GM12878 (cell line): ENCODE measurements at regions of chr2 and their contacts with region 1.

Region 1: DNA sequence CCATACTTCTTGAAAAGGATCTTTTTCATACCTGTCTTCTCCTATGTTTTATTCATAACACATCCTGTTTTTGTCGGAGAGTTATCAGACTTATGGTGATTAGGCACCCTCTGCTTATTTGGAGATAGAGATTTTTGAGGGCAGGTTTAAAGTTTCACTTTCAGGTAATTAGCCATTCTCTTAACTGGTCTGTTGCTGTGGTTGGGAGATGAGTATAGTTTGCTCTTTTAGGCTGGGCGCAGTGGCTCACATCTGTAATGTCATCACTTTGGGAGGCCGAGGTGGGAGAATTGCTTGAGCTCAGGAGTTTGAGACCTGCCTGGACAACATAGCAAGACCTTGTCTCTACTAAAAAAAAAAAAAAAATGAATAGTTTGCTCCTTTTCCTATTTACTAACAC is 25.3 kb downstream of the SFTPB start:
- DNase-seq: peak; percentile 42
- ATAC-seq: peak; percentile 99
- H3K4me3 ChIP-seq: no peak overlapping the region
- H3K27ac ChIP-seq: no peak overlapping the region
- H3K4me1 ChIP-seq: peaks cover 8% of the 10 kb centered on the region
- H3K27me3 ChIP-seq: no peaks in the 10 kb centered on the region
- CTCF ChIP-seq: no peak
- EP300 ChIP-seq: no peak
- POLR2A ChIP-seq: no peak
- RAD21 ChIP-seq: no peak

Region 2: GRCh38 chr2:85475799-85476490 is 166.8 kb before region 1 on chr2:
- CTCF ChIA-PET with region 1: no interaction called
- POLR2A ChIA-PET with region 1: no interaction called
- RAD21 ChIA-PET with region 1: no interaction called
- SMC1A ChIA-PET with region 1: no interaction called
- in situ Hi-C with region 1: no loop called
- intact Hi-C with region 1: no loop called
- DNase-seq: no peak
- ATAC-seq: peak; percentile 50; the same call in 2 of the 3 replicates
- H3K4me3 ChIP-seq: no peak overlapping the region
- H3K27ac ChIP-seq: no peak overlapping the region
- H3K4me1 ChIP-seq: no peaks in the 10 kb centered on the region
- H3K27me3 ChIP-seq: 0 out of 4 replicates have a peak, but pooled peaks cover 0 to 2% of the 10 kb centered on the region in 2 experiments
- CTCF ChIP-seq: no peak
- EP300 ChIP-seq: no peak
- POLR2A ChIP-seq: no peak
- RAD21 ChIP-seq: no peak

Region 3: GRCh38 chr2:85524336-85524933 is 118.3 kb before region 1 on chr2:
- CTCF ChIA-PET with region 1: no interaction called
- POLR2A ChIA-PET with region 1: no interaction called
- RAD21 ChIA-PET with region 1: no interaction called
- SMC1A ChIA-PET with region 1: no interaction called
- in situ Hi-C with region 1: no loop called
- intact Hi-C with region 1: no loop called
- DNase-seq: no peak
- ATAC-seq: peak; percentile 50
- H3K4me3 ChIP-seq: no peak overlapping the region
- H3K27ac ChIP-seq: no peak overlapping the region
- H3K4me1 ChIP-seq: no peaks in the 10 kb centered on the region; the same call in 1 of the 2 replicates
- H3K27me3 ChIP-seq: no peaks in the 10 kb centered on the region; a peak in 1 of 4 replicates
- CTCF ChIP-seq: no peak
- EP300 ChIP-seq: no peak
- POLR2A ChIP-seq: no peak
- RAD21 ChIP-seq: no peak

Region 4: GRCh38 chr2:85619617-85620016 is 23.1 kb before region 1 on chr2:
- CTCF ChIA-PET with region 1: interaction called, 32 read pairs
- POLR2A ChIA-PET with region 1: no interaction called
- RAD21 ChIA-PET with region 1: interaction called, 4 read pairs
- SMC1A ChIA-PET with region 1: interaction called, 4 read pairs
- in situ Hi-C with region 1: no loop called
- intact Hi-C with region 1: no loop called
- DNase-seq: no peak
- ATAC-seq: no peak
- H3K4me3 ChIP-seq: no peak overlapping the region
- H3K27ac ChIP-seq: no peak overlapping the region
- H3K4me1 ChIP-seq: peaks cover 4% of the 10 kb centered on the region; the same call in 1 of the 2 replicates
- H3K27me3 ChIP-seq: no peaks in the 10 kb centered on the region
- CTCF ChIP-seq: no peak
- EP300 ChIP-seq: no peak
- POLR2A ChIP-seq: no peak
- RAD21 ChIP-seq: no peak

Region 5: GRCh38 chr2:85678794-85679672 is 36.3 kb after region 1 on chr2:
- CTCF ChIA-PET with region 1: interaction called, 12 read pairs
- POLR2A ChIA-PET with region 1: no interaction called
- RAD21 ChIA-PET with region 1: interaction called, 8 read pairs
- SMC1A ChIA-PET with region 1: interaction called, 9 read pairs
- in situ Hi-C with region 1: no loop called
- intact Hi-C with region 1: no loop called
- DNase-seq: no peak
- ATAC-seq: peak; percentile 99
- H3K4me3 ChIP-seq: no peak overlapping the region
- H3K27ac ChIP-seq: no peak overlapping the region
- H3K4me1 ChIP-seq: no peaks in the 10 kb centered on the region
- H3K27me3 ChIP-seq: no peaks in the 10 kb centered on the region
- CTCF ChIP-seq: peak; percentile 96 to 99 (median 99)
- EP300 ChIP-seq: no peak
- POLR2A ChIP-seq: no peak
- RAD21 ChIP-seq: peak; percentile 89

Region 6: DNA sequence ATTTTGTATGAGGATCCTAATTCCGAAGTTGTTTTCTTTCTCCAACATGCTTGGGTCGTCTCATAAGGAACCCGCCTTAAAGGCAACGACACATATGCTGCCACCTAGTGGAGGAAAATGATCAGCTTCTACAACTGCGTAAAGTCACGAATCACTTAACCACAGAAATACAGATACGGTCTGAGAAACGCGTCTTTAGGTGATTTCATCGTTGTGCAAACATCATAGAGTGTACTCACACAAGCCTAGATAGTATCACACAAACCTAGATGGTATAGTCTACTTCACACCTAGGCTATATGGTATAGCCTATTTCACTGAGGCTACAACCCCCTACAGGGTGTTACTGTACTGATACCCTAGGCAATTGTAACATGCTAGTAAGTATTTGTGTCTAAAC is 64.6 kb after region 1 on chr2:
- CTCF ChIA-PET with region 1: interaction called, 162 read pairs
- POLR2A ChIA-PET with region 1: no interaction called
- RAD21 ChIA-PET with region 1: interaction called, 42 read pairs
- SMC1A ChIA-PET with region 1: interaction called, 71 read pairs
- in situ Hi-C with region 1: loop called (anchors 5 kb)
- intact Hi-C with region 1: loop called (anchors 2 kb)
- DNase-seq: peak; percentile 75
- ATAC-seq: peak; percentile 79
- H3K4me3 ChIP-seq: no peak overlapping the region
- H3K27ac ChIP-seq: no peak overlapping the region
- H3K4me1 ChIP-seq: peaks cover 21% of the 10 kb centered on the region
- H3K27me3 ChIP-seq: no peaks in the 10 kb centered on the region
- CTCF ChIP-seq: peak; percentile 74 to 83 (median 82)
- EP300 ChIP-seq: 0 out of 4 replicates have a peak, but pooled peaks of 1 of the 2 experiments have one; percentile 34
- POLR2A ChIP-seq: no peak
- RAD21 ChIP-seq: peak; percentile 77

Region 7: GRCh38 chr2:85723707-85724360 is 81.1 kb after region 1 on chr2:
- CTCF ChIA-PET with region 1: interaction called, 28 read pairs
- POLR2A ChIA-PET with region 1: no interaction called
- RAD21 ChIA-PET with region 1: interaction called, 15 read pairs
- SMC1A ChIA-PET with region 1: interaction called, 12 read pairs
- in situ Hi-C with region 1: no loop called
- intact Hi-C with region 1: loop called (anchors 5 kb)
- DNase-seq: no peak
- ATAC-seq: no peak
- H3K4me3 ChIP-seq: no peak overlapping the region
- H3K27ac ChIP-seq: no peak overlapping the region
- H3K4me1 ChIP-seq: no peaks in the 10 kb centered on the region
- H3K27me3 ChIP-seq: peaks cover 0 to 2% of the 10 kb centered on the region in 2 experiments; a peak in 1 of 4 replicates
- CTCF ChIP-seq: no peak
- EP300 ChIP-seq: no peak
- POLR2A ChIP-seq: no peak
- RAD21 ChIP-seq: no peak

Region 8: GRCh38 chr2:85813982-85814801 is 171.5 kb after region 1 on chr2:
- CTCF ChIA-PET with region 1: interaction called, 31 read pairs
- POLR2A ChIA-PET with region 1: interaction called, 4 read pairs
- RAD21 ChIA-PET with region 1: interaction called, 25 read pairs
- SMC1A ChIA-PET with region 1: interaction called, 17 read pairs
- in situ Hi-C with region 1: no loop called
- intact Hi-C with region 1: loop called (anchors 5 kb)
- DNase-seq: peak; percentile 30
- ATAC-seq: peak; percentile 99
- H3K4me3 ChIP-seq: no peak overlapping the region
- H3K27ac ChIP-seq: no peak overlapping the region
- H3K4me1 ChIP-seq: no peaks in the 10 kb centered on the region
- H3K27me3 ChIP-seq: no peaks in the 10 kb centered on the region
- CTCF ChIP-seq: peak; percentile 94 to 98 (median 95); a peak in 5 of 6 replicates
- EP300 ChIP-seq: no peak
- POLR2A ChIP-seq: no peak
- RAD21 ChIP-seq: peak; percentile 94

Region 9: GRCh38 chr2:85893428-85894258 is 250.9 kb after region 1 on chr2:
- CTCF ChIA-PET with region 1: no interaction called
- POLR2A ChIA-PET with region 1: no interaction called
- RAD21 ChIA-PET with region 1: no interaction called
- SMC1A ChIA-PET with region 1: no interaction called
- in situ Hi-C with region 1: no loop called
- intact Hi-C with region 1: no loop called
- DNase-seq: no peak
- ATAC-seq: no peak
- H3K4me3 ChIP-seq: no peak overlapping the region
- H3K27ac ChIP-seq: no peak overlapping the region
- H3K4me1 ChIP-seq: peaks cover 7% of the 10 kb centered on the region; the same call in 1 of the 2 replicates
- H3K27me3 ChIP-seq: no peaks in the 10 kb centered on the region
- CTCF ChIP-seq: no peak
- EP300 ChIP-seq: no peak
- POLR2A ChIP-seq: no peak
- RAD21 ChIP-seq: no peak